Heart left ventricle (tissue), 16 donors: ENCODE measurements at regions of chr2 and their contacts with region 1.

Region 1: DNA sequence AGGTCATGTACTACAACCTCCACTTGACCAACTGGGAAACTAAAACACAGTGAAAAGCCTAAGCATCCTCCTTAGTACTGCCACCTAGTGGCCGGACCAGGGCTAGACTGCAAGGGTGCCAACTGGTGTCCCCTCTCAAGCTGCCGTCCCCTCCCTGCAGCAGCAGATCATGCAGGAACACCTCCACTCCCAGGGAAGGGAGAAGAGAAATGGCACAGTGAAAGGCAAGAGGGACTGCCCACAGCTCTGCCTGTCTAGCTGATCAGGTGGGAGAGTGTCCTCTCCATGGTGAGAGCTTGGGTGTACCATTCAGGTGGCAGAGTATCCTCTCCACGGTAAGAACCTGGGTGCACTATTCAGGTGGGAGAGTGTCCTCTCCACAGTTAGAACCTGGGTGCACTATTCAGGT is 78.1 kb downstream of the AAK1 start:
- DNase-seq: peak; percentile 30 to 71 (median 44)
- ATAC-seq: peak in 3 of 4 donors; percentile 14 to 66 (median 35)
- H3K4me3 ChIP-seq: no peak overlapping the region
- H3K27ac ChIP-seq: peak overlapping the region in 1 of 12 donors; percentile 47
- H3K4me1 ChIP-seq: peaks cover 2 to 86% (median 50%) of the 10 kb centered on the region in 12 donors
- H3K27me3 ChIP-seq: no peaks in the 10 kb centered on the region
- CTCF ChIP-seq: peak; percentile 55 to 84 (median 72)
- POLR2A ChIP-seq: no peak

Region 2: DNA sequence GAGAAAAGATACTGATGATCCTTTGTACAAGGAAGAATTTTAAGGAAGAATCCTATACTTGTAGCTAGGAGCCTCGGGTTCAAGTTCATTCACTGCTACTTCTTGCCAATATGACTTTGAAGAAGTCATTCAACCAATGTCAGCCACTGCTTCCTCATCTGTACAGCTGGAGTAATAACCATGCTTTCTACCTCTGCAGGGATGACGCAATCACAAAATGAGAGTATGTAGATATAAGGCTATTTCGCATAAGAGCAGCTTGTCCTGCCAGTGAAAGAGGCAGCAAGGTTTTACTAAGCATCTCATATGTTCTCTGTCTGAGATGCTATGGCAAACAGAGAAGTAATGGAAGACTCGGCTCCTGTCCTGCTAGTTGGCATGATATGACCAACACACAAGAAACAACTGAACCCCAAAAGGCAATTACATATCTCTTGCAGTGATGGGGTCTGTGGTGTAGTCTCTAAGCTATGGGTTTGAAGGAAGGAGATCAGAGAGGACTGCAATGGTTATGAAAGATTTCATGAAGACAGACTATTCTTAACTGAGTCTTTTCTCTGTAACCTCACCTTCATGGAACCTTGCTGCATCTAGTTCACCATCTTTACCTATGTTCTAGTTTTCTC is 68.9 kb after region 1 on chr2:
- intact Hi-C with region 1: loop called in 2 of 10 experiments (anchors 10 kb)
- DNase-seq: no peak
- ATAC-seq: no peak
- H3K4me3 ChIP-seq: no peak overlapping the region
- H3K27ac ChIP-seq: no peak overlapping the region
- H3K4me1 ChIP-seq: peaks cover 0 to 81% (median 46%) of the 10 kb centered on the region in 12 donors
- H3K27me3 ChIP-seq: no peaks in the 10 kb centered on the region
- CTCF ChIP-seq: no peak
- POLR2A ChIP-seq: no peak

Region 3: GRCh38 chr2:69829256-69830046 is 264.0 kb after region 1 on chr2 and contains the start of gene GMCL1:
- intact Hi-C with region 1: loop called in 3 of 10 experiments (anchors 10 kb)
- DNase-seq: peak; percentile 97 to 99 (median 97)
- ATAC-seq: peak; percentile 98 to 99 (median 98)
- H3K4me3 ChIP-seq: peak within 1 kb of the TSS; percentile 61 to 99 (median 90)
- H3K27ac ChIP-seq: peak within 1 kb of the TSS; percentile 82 to 97 (median 92)
- H3K4me1 ChIP-seq: peaks cover 0 to 32% (median 22%) of the 10 kb centered on the region in 12 donors
- H3K27me3 ChIP-seq: no peaks in the 10 kb centered on the region
- CTCF ChIP-seq: peak in 4 of 12 donors; percentile 14 to 41 (median 28)
- POLR2A ChIP-seq: peak in 1 of 2 donors; percentile 87
- total RNA-seq, gene GMCL1: 4.4 to 7.2 (median 5.2) TPM